Right ventricle myocardium superior (tissue), 1 donor: ENCODE measurements at regions of chr12 and their contacts with region 1.

Region 1: DNA sequence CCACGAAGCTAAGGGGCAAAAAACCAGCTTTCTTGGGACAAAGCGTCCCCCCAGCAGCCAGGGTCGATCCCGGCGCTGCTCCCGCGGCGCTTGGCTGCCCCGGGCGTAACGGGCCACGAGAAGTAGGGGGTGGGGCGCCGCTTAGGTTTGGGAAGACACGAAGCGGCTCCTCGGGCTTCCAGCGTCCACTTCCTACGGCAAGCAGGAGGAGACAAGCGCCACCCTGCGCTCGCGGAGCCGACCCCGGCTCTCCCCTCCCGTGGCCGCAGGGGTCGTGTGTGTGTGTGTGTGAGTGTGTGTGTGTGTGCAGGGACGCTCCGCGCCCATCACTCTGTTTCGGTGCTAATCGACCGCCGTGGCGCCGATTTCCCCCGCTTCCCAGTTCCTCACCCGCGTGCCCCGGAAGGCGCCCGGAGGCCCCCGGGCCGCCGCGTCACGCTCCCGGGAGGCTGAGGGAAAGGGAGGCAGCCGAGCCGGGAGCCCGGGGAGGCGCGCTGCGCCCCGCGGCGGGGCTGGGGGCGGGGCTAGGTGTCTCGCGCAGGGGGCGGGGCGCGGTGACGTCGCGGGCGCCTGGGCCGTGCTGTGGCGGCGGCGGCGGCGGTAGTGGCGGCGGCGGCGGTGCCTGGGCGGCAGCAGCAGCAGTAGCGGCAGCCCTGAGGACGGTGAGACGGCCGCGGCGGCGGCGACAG is at the start of gene ERC1:
- DNase-seq: peak; percentile 94
- ATAC-seq: peak; percentile 96
- total RNA-seq, gene ERC1: 46.6 TPM

Region 2: GRCh38 chr12:1044696-1045095 is 53.9 kb after region 1 on chr12:
- intact Hi-C with region 1: no loop called
- DNase-seq: no peak
- ATAC-seq: no peak

Region 3: GRCh38 chr12:1071182-1071581 is 80.4 kb after region 1 on chr12:
- intact Hi-C with region 1: no loop called
- DNase-seq: no peak
- ATAC-seq: no peak

Region 4: GRCh38 chr12:1093166-1093751 is 102.5 kb after region 1 on chr12:
- intact Hi-C with region 1: loop called (anchors 10 kb)
- DNase-seq: no peak
- ATAC-seq: peak; percentile 62

Region 5: GRCh38 chr12:1851151-1851701 is 860.4 kb after region 1 on chr12:
- intact Hi-C with region 1: no loop called
- DNase-seq: no peak
- ATAC-seq: no peak